ENCODE measurements at regions of chr12 and their contacts with region 1.

Region 1: GRCh38 chr12:59595883-59596540 is at the start of gene SLC16A7:
- DNase-seq: peak; percentile 89 to 96 (median 94)
- H3K4me3 ChIP-seq: peak within 1 kb of the TSS in 3 of 4 donors; percentile 66 to 83 (median 80)
- H3K27ac ChIP-seq: peak within 1 kb of the TSS; percentile 66 to 96 (median 94)
- H3K4me1 ChIP-seq: peaks cover 5 to 22% of the 10 kb centered on the region in 2 donors
- H3K27me3 ChIP-seq: no peaks in the 10 kb centered on the region
- CTCF ChIP-seq: no peak
- POLR2A ChIP-seq: peak; percentile 40 to 78
- total RNA-seq, gene SLC16A7: 34.8 to 103 (median 67.3) TPM

Region 2: DNA sequence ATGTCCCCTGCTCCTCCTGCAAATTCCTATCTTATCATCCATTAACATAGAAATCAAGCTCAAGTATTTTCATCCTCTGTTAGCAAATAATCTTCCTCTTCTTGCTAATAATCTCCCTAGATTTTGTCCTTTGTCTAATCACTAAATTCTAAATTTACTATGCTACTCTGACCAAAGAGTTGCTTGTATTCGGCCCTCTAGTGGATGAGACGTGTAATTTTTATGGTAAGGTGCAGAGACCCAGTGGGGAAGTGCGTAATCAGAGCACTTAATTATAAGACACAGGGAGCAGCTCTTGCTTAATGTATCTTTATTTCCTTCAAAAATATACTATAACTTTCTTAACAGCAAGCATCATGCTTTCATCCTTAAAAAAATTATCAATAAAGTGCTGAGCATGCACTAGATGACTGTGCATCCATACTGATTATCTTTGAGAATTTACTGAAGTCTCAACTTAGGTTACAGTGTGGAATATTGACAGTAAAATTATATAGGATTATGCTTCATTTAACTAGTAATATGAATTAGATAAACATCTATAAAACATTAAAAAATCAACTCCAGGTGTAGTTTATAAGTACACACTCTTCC is 212.4 kb after region 1 on chr12:
- intact Hi-C with region 1: loop called in 1 of 2 experiments (anchors 10 kb)
- DNase-seq: peak in 1 of 7 donors; percentile 23
- H3K4me3 ChIP-seq: no peak overlapping the region
- H3K27ac ChIP-seq: no peak overlapping the region
- H3K4me1 ChIP-seq: peaks cover 0 to 3% of the 10 kb centered on the region in 2 donors
- H3K27me3 ChIP-seq: no peaks in the 10 kb centered on the region
- CTCF ChIP-seq: peak; percentile 65 to 84 (median 74)
- POLR2A ChIP-seq: no peak

Measured in adrenal gland (tissue), 19 donors.